ENCODE measurements at regions of chr20 and their contacts with region 1.

Region 1: DNA sequence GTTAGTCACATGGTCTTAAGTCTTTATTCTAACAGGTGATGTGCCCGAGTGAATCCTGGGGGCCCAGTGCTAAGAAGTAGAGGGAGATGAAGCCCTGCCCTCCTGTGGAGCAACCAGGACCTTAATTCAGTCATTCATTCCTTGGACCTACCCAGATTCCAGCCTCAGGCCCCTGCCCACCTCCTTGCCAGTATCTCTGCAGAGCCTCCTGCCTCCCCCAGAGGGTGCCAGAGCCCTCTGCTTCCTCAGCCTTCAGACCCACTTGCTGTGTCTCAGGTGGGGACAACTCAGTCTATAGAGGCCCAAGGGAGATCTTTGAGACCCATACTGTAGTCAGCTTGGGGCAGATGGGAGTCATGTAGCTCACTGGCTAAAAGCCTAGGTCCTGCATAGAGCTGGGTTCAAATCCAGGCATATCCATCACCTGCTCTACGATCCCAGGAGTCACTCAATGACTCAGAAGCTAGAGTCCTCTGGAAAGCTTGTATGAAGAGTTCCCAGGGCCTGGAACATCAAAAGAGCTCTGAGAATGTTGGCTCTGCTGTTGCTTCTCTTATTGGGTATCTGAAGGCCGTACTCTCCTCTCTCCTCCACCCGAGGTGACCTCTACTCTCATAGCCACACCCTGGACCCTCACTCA is 3.9 kb upstream of the SIGLEC1 start:
- DNase-seq: peak; percentile 73 to 74
- ATAC-seq: peak; percentile 89 to 97
- H3K4me3 ChIP-seq: no peak overlapping the region
- H3K27ac ChIP-seq: no peak overlapping the region
- H3K4me1 ChIP-seq: no peaks in the 10 kb centered on the region
- CTCF ChIP-seq: peak; percentile 68
- EP300 ChIP-seq: no peak
- POLR2A ChIP-seq: no peak
- RAD21 ChIP-seq: peak; percentile 77 to 92

Region 2: DNA sequence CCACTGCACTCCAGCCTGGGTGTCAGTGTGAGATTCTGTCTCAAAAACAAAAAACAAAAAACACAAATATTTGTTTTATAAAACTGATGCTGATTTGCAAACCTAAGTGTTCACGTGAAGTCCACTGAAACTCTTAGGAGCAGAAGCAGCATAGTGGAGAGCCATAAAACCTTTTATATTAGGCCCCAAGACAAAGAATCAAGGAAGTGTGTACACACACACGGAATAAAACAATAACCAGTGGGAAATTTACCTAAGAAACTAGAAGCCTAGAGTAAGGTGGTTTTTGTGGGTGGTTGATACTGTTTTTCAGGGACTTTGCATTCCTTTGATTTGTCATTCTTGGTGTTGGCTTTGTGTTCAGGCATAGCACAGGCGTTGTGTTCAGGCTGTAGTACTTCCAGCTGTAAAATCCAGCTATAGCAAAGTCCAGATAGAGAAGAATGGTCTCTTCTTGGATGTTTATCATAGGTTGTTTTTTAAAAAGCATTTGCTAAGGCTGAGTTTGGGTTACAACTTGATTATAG is 184.2 kb before region 1 on chr20:
- CTCF ChIA-PET with region 1: no interaction called
- POLR2A ChIA-PET with region 1: no interaction called
- DNase-seq: no peak
- ATAC-seq: no peak
- H3K4me3 ChIP-seq: no peak overlapping the region
- H3K27ac ChIP-seq: no peak overlapping the region
- H3K4me1 ChIP-seq: no peaks in the 10 kb centered on the region
- CTCF ChIP-seq: no peak
- EP300 ChIP-seq: no peak
- POLR2A ChIP-seq: no peak
- RAD21 ChIP-seq: no peak

Region 3: DNA sequence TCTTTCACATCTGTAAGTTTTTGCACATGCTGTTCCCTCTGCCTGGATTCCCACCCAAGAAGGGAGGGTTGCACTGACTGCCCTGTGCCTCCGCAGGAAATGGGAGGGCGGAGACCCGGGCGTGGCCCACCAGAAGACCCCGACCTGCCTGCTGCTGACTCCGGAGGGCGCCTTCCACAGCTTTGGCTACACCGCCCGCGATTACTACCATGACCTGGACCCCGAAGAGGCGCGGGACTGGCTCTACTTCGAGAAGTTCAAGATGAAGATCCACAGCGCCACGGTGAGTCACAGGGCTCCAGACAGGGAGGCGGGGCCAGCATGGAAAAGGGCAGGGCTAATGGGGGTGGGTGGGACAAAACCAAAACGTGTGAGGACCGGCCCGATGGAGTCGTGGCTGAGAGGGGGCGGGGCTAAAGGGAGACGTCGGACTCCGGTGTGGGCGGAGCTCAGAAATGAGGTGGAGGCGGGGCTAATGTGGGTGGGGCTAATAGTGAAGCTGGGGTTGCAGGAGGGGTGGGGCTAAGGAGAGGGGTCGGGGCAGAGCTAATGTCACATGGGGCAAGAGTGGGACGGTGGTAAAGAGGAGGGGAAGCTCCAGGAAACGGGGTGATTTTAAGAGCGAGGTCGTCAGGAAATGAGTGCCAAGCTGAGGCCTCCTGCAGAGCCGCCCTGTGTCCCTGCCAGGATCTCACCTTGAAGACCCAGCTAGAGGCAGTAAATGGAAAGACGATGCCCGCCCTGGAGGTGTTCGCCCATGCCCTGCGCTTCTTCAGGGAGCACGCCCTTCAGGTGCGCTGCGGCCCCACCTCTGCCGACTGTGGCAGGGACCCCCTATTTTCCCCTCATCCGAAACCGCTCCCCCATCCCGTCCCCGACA is 28.7 kb after region 1 on chr20:
- CTCF ChIA-PET with region 1: interaction called, 169 read pairs
- POLR2A ChIA-PET with region 1: no interaction called
- DNase-seq: peak; percentile 94 to 95
- ATAC-seq: peak; percentile 62 to 77
- H3K4me3 ChIP-seq: peak overlapping the region; percentile 44
- H3K27ac ChIP-seq: peak overlapping the region; percentile 64 to 75
- H3K4me1 ChIP-seq: peaks cover 4% of the 10 kb centered on the region; the same call in 1 of the 3 replicates
- CTCF ChIP-seq: no peak
- EP300 ChIP-seq: no peak
- POLR2A ChIP-seq: no peak
- RAD21 ChIP-seq: no peak

Region 4: GRCh38 chr20:3826420-3826819 is 110.1 kb after region 1 on chr20:
- CTCF ChIA-PET with region 1: no interaction called
- POLR2A ChIA-PET with region 1: no interaction called
- DNase-seq: no peak
- ATAC-seq: no peak
- H3K4me3 ChIP-seq: no peak overlapping the region
- H3K27ac ChIP-seq: no peak overlapping the region
- H3K4me1 ChIP-seq: peaks cover 3% of the 10 kb centered on the region
- CTCF ChIP-seq: no peak
- EP300 ChIP-seq: no peak
- POLR2A ChIP-seq: no peak
- RAD21 ChIP-seq: no peak